Colonic mucosa (tissue), 4 donors: ENCODE measurements at regions of chr6 and their contacts with region 1.

Region 1: DNA sequence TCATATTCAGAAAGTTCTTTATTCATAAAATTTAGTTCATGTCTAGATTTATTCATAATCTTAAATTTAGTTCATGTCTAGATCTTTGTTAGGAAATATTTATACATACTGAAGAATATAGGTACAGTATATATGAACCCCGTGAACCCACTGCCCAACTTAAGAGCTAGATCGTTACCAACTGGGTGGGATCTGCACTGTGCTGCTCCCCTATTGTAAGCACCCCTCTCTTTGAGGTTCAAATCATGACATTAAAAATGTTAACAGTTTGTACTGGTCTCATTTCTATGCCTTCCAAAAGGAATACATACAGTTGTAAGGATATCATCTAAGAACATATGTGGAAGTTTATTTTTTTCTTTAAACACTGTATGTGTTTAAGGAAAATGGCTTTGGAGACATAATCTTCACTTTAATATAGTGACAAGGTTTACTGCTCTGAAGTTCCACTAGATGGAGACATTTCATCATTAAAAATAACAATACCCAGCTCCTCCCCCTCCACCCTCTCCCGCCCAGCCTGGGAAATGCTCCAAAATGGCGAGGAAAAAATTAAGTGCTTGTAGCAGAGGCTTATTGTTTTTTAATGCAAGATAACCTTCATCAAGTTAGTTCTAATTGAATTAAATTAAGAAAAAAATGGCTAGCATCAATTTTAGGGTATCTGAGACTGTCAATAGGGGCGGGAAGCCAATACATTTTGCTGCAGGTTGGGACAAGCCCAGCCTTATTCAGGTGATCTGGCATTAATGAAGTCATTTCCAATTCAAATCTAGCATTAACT is 104.1 kb upstream of the TRAF3IP2 start:
- DNase-seq: peak; percentile 76
- H3K4me3 ChIP-seq: no peak overlapping the region
- H3K27ac ChIP-seq: no peak overlapping the region
- H3K4me1 ChIP-seq: peaks cover 8% of the 10 kb centered on the region
- H3K27me3 ChIP-seq: no peaks in the 10 kb centered on the region
- CTCF ChIP-seq: peak; percentile 74

Region 2: DNA sequence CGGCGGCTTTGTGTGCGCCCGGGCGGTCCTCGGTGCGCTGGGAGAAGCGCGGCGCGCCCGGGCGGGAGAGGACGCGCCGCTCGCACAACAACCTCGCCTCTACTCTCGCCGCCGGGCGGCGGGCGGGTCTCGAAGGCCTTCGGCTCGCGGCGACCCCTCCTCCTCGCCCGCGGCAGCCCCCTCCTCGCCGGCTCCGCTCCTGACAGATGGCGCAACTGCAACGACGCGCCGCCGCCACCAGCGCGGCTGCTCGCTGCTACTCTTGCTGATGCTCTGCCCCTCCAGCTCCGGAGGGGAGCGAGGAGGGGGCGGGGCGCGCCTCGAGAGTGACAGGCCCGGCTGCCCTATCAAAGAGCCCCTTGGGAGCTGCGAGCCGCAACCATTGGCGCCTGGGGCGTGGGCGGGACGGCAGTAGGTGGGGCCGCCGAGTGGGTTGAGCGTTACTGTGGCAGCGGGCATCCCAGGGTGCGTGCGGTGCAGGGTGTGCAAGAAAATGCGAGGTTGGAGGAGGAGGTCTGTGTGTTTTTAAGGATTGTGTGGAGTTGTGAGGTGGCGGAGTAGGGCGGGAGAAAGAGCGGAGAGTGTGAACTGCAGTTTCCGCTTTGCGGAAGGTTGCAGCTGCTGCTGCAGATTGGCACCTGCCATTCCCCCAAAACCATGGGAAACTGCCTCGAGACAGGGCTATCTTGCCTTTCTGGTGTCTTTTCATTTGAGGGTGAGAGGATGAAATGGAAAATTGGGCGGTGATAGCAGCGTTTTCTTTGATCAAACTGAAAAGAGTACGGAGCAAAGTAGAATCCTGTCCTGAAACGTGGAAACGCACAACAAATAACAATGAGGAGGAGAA is 163.6 kb after region 1 on chr6 and contains the start of gene FYN:
- intact Hi-C with region 1: loop called (anchors 10 kb)
- DNase-seq: peak; percentile 97
- H3K4me3 ChIP-seq: peak within 1 kb of the TSS; percentile 42
- H3K27ac ChIP-seq: peak within 1 kb of the TSS; percentile 39
- H3K4me1 ChIP-seq: no peaks in the 10 kb centered on the region
- H3K27me3 ChIP-seq: peaks cover 19% of the 10 kb centered on the region
- CTCF ChIP-seq: no peak
- total RNA-seq, gene FYN: 11.3 to 21.5 TPM

Region 3: GRCh38 chr6:111997078-111997852 is 287.5 kb after region 1 on chr6:
- intact Hi-C with region 1: loop called (anchors 2 kb)
- DNase-seq: peak; percentile 73
- H3K4me3 ChIP-seq: no peak overlapping the region
- H3K27ac ChIP-seq: no peak overlapping the region
- H3K4me1 ChIP-seq: no peaks in the 10 kb centered on the region
- H3K27me3 ChIP-seq: no peaks in the 10 kb centered on the region
- CTCF ChIP-seq: peak; percentile 84

Region 4: DNA sequence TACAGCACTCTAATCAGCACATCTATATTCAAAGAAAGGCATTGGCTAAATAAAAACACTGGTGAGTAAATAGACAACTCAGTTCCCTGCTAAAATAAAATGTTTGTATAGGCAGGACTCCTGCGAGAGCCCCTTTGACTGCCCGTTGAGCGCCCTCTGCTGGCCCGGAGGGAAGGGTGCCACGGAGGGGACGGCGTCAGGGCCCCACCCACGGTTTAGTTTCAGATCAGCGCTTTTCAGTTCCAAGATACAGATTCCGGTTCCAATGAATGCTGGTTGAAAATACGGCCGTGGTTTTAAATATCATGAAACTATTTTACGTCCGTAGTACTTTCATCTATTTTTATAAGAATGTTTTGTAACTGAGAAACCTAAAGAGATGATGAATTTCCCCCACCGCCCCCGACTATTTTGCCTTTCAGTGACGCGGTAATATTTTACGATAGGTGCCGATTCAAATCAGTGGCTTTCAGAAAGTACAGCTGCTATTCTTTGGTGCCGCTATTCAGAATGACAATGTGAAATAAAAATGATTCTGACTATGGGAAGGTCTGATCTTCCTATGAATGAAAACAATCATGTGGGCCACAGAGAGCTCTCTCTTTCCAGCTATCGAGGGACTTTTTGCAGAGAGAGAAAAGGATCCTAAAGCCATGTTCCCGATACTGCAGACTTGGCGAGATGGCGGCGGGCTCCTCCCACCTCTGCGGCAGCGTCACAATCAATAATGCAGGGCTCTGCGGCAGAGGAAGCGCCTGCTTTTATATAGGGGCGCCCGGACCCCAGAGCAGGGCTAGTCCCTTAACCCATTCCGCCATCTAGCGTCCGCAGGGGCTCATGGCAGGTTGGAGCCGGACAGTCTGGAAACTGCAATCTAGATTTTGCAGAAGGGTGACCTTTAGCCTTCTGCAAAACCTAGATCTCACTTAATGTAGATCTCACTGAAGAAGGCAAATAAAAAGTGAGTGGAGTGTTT is 333.5 kb after region 1 on chr6:
- intact Hi-C with region 1: loop called (anchors 5 kb)
- DNase-seq: peak; percentile 94
- H3K4me3 ChIP-seq: peak overlapping the region; percentile 44
- H3K27ac ChIP-seq: peak overlapping the region; percentile 66
- H3K4me1 ChIP-seq: no peaks in the 10 kb centered on the region
- H3K27me3 ChIP-seq: no peaks in the 10 kb centered on the region
- CTCF ChIP-seq: peak; percentile 98

Region 5: DNA sequence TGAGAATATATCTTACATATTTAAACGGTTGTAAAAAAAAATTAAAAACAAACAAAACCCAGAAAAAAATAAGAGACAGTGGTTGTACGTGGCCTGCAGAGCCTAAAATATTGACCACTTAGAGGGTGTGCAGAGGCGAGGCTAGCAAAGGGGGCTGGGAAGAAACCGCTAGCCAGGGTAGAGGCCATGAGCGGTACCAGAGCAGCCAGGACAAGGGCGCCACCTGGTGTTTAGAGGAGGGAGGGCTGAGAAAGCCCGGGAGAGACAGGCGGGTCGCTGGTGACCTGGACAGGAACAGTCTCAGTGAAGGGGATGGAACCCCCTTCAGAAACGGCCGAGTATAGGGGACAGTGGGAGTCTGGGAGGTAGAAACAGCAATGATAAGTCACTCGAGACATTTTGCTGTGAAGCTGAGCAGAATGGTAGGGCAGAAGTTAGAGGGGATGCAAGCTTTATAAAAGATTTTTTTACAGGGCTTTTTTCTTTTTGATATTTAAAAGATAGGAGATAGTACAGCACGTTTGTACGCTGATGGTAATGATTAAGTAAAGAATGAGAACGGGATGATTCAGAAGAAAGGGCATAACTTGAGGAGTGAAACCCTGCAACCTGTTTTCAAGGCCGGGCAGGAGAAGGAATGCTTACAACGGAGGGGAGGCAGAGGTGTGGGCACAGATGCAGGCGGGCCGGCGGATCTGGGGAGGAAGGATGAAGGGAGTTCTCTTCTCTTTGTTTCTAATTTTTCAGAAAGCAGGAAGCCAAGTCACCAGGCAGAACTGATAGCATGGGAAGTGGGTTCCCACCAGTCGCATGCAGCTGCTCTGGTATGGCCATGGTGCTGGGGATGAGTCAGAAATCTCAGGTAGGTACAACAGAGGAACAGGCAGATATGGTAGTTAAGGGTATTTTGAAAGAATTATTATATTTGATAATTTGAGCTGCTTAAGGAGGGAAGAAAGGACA is 453.8 kb after region 1 on chr6:
- intact Hi-C with region 1: loop called (anchors 5 kb)
- DNase-seq: peak; percentile 65
- H3K4me3 ChIP-seq: no peak overlapping the region
- H3K27ac ChIP-seq: no peak overlapping the region
- H3K4me1 ChIP-seq: no peaks in the 10 kb centered on the region
- H3K27me3 ChIP-seq: no peaks in the 10 kb centered on the region
- CTCF ChIP-seq: peak; percentile 85